CD14-positive monocyte (primary cell): ENCODE measurements at regions of chr2 and their contacts with region 1.

Region 1: DNA sequence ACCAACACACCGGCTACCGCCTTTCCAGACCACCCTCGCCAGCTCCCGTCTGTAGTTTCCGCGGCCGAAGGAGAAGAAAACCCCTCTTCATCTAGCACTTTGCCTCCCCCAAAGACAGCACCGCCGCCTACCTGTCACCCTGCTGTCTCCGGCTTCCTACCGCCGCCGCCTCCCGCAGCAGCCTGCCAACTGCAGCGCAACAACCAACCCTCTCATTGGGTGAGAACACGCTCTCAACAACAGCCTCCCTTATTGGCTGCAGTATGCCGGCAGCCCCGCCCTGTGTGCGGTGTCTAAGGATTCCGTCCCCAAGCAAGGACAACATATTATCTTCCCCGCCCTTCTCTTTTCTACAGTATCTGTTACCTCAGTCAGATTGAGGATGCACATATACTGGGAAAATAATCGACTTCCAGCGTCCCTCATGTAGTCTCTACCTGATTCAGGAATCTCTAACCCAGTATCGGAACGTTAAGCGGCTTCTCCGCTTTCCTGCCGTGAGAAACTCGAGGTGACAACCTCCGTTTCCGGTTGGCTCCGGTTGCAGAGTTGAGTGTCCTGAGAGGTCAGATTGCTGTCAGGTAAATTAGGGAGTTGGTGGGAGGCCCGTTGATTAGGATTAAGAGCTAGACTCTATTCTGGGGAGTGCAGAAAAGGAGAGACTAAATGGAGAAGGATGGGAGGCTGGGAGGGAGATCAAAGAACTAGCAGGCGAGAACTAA is at the starts of genes HYCC2 and NDUFB3:
- DNase-seq: peak; percentile 92 to 93 (median 92)
- H3K4me3 ChIP-seq: peak within 1 kb of the TSS; percentile 76 to 89 (median 83)
- H3K4me3 Mint-ChIP-seq: peak within 1 kb of the TSS; percentile 98 to 100
- H3K27ac ChIP-seq: peak within 1 kb of the TSS; percentile 48 to 94
- H3K27ac Mint-ChIP-seq: peak within 1 kb of the TSS; percentile 87 to 99 (median 92)
- H3K4me1 ChIP-seq: peaks cover 28 to 53% of the 10 kb centered on the region in 2 donors
- H3K4me1 Mint-ChIP-seq: peaks cover 43% of the 10 kb centered on the region
- H3K27me3 ChIP-seq: no peaks in the 10 kb centered on the region
- H3K27me3 Mint-ChIP-seq: peaks cover 0 to 2% (median 2%) of the 10 kb centered on the region in 3 donors
- CTCF ChIP-seq: no peak
- polyA plus RNA-seq, gene HYCC2: 6.8 to 10.2 (median 7.7) TPM
- polyA plus RNA-seq, gene NDUFB3: 26.3 to 340 (median 313) TPM

Region 2: GRCh38 chr2:200901459-200902072 is 170.1 kb before region 1 on chr2:
- intact Hi-C with region 1: loop called (anchors 5 to 10 kb)
- DNase-seq: peak; percentile 75 to 79 (median 76)
- H3K4me3 ChIP-seq: no peak overlapping the region
- H3K4me3 Mint-ChIP-seq: no peak overlapping the region
- H3K27ac ChIP-seq: no peak overlapping the region
- H3K27ac Mint-ChIP-seq: peak overlapping the region in 5 of 7 donors; percentile 7 to 88 (median 47)
- H3K4me1 ChIP-seq: peaks cover 8 to 11% of the 10 kb centered on the region in 2 donors
- H3K4me1 Mint-ChIP-seq: peaks cover 13% of the 10 kb centered on the region
- H3K27me3 ChIP-seq: no peaks in the 10 kb centered on the region
- H3K27me3 Mint-ChIP-seq: no peaks in the 10 kb centered on the region
- CTCF ChIP-seq: peak; percentile 88

Region 3: DNA sequence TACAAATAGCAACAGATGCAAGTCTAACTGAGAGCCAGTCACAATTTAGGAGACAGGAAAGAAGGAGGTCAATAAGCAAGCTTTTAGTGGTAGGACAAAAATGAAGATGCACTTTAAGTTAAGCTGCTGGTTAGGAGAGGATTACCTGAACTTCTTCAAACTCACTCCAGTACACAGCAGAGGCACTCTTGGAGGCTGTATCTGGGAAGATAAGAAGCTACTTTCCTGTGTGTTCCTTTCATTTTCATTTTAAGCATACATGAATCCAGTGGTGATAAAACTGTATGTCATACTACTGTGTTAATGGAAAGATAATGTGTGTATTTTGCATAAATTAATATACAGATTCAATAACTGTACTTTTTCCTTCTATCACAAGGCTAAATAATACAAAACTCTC is 49.7 kb before region 1 on chr2:
- intact Hi-C with region 1: no loop called
- DNase-seq: no peak
- H3K4me3 ChIP-seq: no peak overlapping the region
- H3K4me3 Mint-ChIP-seq: no peak overlapping the region
- H3K27ac ChIP-seq: no peak overlapping the region
- H3K27ac Mint-ChIP-seq: peak overlapping the region in 1 of 7 donors; percentile 48
- H3K4me1 ChIP-seq: no peaks in the 10 kb centered on the region
- H3K4me1 Mint-ChIP-seq: peaks cover 6% of the 10 kb centered on the region
- H3K27me3 ChIP-seq: no peaks in the 10 kb centered on the region
- H3K27me3 Mint-ChIP-seq: no peaks in the 10 kb centered on the region
- CTCF ChIP-seq: no peak

Region 4: GRCh38 chr2:201118121-201118960 is 46.7 kb after region 1 on chr2:
- intact Hi-C with region 1: loop called (anchors 2 to 5 kb)
- DNase-seq: peak; percentile 67 to 88 (median 68)
- H3K4me3 ChIP-seq: peak overlapping the region; percentile 77 to 99 (median 83)
- H3K4me3 Mint-ChIP-seq: peak overlapping the region; percentile 97 to 99
- H3K27ac ChIP-seq: peak overlapping the region; percentile 96 to 99
- H3K27ac Mint-ChIP-seq: peak overlapping the region; percentile 93 to 99 (median 99)
- H3K4me1 ChIP-seq: peaks cover 40 to 63% of the 10 kb centered on the region in 2 donors
- H3K4me1 Mint-ChIP-seq: peaks cover 43% of the 10 kb centered on the region
- H3K27me3 ChIP-seq: no peaks in the 10 kb centered on the region
- H3K27me3 Mint-ChIP-seq: peaks cover 0 to 4% (median 1%) of the 10 kb centered on the region in 3 donors
- CTCF ChIP-seq: peak; percentile 35

Region 5: GRCh38 chr2:201158111-201158929 is 86.7 kb after region 1 on chr2:
- intact Hi-C with region 1: loop called in 1 of 2 experiments (anchors 5 kb)
- DNase-seq: peak; percentile 93 to 99 (median 97)
- H3K4me3 ChIP-seq: peak overlapping the region in 1 of 3 experiments; percentile 28
- H3K4me3 Mint-ChIP-seq: peak overlapping the region in 1 of 2 donors; percentile 72
- H3K27ac ChIP-seq: peak overlapping the region; percentile 91 to 95
- H3K27ac Mint-ChIP-seq: peak overlapping the region; percentile 98 to 99 (median 98)
- H3K4me1 ChIP-seq: peaks cover 47 to 53% of the 10 kb centered on the region in 2 donors
- H3K4me1 Mint-ChIP-seq: peaks cover 48% of the 10 kb centered on the region
- H3K27me3 ChIP-seq: no peaks in the 10 kb centered on the region
- H3K27me3 Mint-ChIP-seq: no peaks in the 10 kb centered on the region
- CTCF ChIP-seq: peak; percentile 87

Region 6: GRCh38 chr2:201171259-201171814 is 99.7 kb after region 1 on chr2:
- intact Hi-C with region 1: loop called in 1 of 2 experiments (anchors 5 kb)
- DNase-seq: no peak
- H3K4me3 ChIP-seq: no peak overlapping the region
- H3K4me3 Mint-ChIP-seq: no peak overlapping the region
- H3K27ac ChIP-seq: no peak overlapping the region
- H3K27ac Mint-ChIP-seq: peak overlapping the region in 2 of 7 donors; percentile 49 to 65
- H3K4me1 ChIP-seq: peaks cover 3 to 15% of the 10 kb centered on the region in 2 donors
- H3K4me1 Mint-ChIP-seq: peaks cover 31% of the 10 kb centered on the region
- H3K27me3 ChIP-seq: no peaks in the 10 kb centered on the region
- H3K27me3 Mint-ChIP-seq: peaks cover 0 to 3% (median 0%) of the 10 kb centered on the region in 3 donors
- CTCF ChIP-seq: no peak

Region 7: GRCh38 chr2:201182650-201183364 is 111.2 kb after region 1 on chr2 and contains the start of gene CASP10:
- intact Hi-C with region 1: loop called (anchors 5 kb)
- DNase-seq: peak; percentile 48 to 74 (median 74)
- H3K4me3 ChIP-seq: peak within 1 kb of the TSS; percentile 76 to 99 (median 88)
- H3K4me3 Mint-ChIP-seq: peak within 1 kb of the TSS; percentile 84 to 95
- H3K27ac ChIP-seq: peak within 1 kb of the TSS in 1 of 2 donors; percentile 80
- H3K27ac Mint-ChIP-seq: peak within 1 kb of the TSS; percentile 84 to 93 (median 92)
- H3K4me1 ChIP-seq: peaks cover 28 to 58% of the 10 kb centered on the region in 2 donors
- H3K4me1 Mint-ChIP-seq: peaks cover 52% of the 10 kb centered on the region
- H3K27me3 ChIP-seq: no peaks in the 10 kb centered on the region
- H3K27me3 Mint-ChIP-seq: peaks cover 0 to 2% (median 0%) of the 10 kb centered on the region in 3 donors
- CTCF ChIP-seq: peak; percentile 46
- polyA plus RNA-seq, gene CASP10: 17.7 to 23.3 (median 18.9) TPM